Dorsolateral prefrontal cortex (tissue), 120 donors: ENCODE measurements at regions of chr2 and their contacts with region 1.

Region 1: DNA sequence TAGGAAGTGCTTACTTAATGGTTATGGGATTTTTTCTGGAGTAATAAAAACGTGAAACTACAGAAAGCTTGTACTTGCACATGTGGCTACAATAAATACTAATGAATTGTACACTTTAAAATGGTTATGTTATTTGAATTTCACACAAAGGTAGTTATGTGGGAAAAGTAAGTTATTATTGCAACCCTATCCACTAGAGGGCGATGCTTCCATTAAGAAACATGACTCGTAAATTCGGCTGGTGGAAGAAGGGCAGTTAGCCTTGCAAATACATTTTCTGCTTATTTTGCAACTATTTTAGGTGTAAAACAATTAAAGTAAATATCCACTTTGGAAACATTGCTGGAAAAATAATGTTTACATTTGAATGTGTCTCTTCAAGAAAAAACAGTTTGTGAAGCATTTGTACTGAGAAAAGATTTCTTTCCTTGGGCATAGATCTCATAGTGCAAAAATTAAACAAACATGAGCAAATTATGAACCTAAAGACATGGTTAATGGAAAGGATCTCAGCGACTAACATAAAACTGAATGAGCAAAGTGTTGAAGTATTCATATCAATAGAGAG is 68.1 kb upstream of the CSRNP3 start:
- DNase-seq: peak in 1 of 10 donors; percentile 16
- H3K4me3 ChIP-seq: peak overlapping the region in 5 of 59 donors; percentile 9 to 23 (median 16)
- H3K27ac ChIP-seq: no peak overlapping the region
- H3K27me3 ChIP-seq: no peaks in the 10 kb centered on the region
- CTCF ChIP-seq: peak; percentile 56 to 92 (median 82)

Region 2: GRCh38 chr2:165469417-165469816 is 68.0 kb after region 1 on chr2 and contains the start of gene CSRNP3:
- intact Hi-C with region 1: loop called in 1 of 2 experiments (anchors 10 kb)
- DNase-seq: peak; percentile 21 to 86 (median 77)
- H3K4me3 ChIP-seq: peak within 1 kb of the TSS; percentile 35 to 77 (median 62)
- H3K27ac ChIP-seq: peak within 1 kb of the TSS in 49 of 59 donors; percentile 8 to 81 (median 57)
- H3K27me3 ChIP-seq: no peaks in the 10 kb centered on the region
- CTCF ChIP-seq: peak in 20 of 56 donors; percentile 7 to 49 (median 30)
- total RNA-seq, gene CSRNP3: 36.6 to 164 (median 108) TPM

Region 3: DNA sequence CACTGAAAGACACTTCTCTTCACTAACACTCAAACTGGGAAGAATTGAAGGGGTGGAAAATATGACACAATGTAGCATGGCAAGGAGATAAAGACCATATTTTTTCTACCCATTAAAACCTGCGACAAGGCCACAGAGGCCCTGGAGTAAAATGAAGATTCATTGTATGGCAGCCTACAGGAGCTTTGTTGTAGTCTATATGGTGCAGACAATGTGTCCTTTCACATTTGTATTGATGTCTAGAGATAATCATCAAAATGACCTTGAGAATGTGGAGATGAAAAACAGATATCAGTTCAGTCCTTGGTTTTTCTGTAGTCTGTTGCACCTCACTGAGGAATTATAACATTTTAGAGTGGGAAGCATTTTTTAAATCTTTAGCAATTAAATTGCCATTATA is 148.2 kb after region 1 on chr2:
- intact Hi-C with region 1: loop called in 1 of 2 experiments (anchors 5 kb)
- DNase-seq: no peak
- H3K4me3 ChIP-seq: no peak overlapping the region
- H3K27ac ChIP-seq: peak overlapping the region in 3 of 59 donors; percentile 0 to 35 (median 6)
- H3K27me3 ChIP-seq: no peaks in the 10 kb centered on the region
- CTCF ChIP-seq: no peak